ENCODE measurements at regions of chr7 and their contacts with region 1.

Region 1: DNA sequence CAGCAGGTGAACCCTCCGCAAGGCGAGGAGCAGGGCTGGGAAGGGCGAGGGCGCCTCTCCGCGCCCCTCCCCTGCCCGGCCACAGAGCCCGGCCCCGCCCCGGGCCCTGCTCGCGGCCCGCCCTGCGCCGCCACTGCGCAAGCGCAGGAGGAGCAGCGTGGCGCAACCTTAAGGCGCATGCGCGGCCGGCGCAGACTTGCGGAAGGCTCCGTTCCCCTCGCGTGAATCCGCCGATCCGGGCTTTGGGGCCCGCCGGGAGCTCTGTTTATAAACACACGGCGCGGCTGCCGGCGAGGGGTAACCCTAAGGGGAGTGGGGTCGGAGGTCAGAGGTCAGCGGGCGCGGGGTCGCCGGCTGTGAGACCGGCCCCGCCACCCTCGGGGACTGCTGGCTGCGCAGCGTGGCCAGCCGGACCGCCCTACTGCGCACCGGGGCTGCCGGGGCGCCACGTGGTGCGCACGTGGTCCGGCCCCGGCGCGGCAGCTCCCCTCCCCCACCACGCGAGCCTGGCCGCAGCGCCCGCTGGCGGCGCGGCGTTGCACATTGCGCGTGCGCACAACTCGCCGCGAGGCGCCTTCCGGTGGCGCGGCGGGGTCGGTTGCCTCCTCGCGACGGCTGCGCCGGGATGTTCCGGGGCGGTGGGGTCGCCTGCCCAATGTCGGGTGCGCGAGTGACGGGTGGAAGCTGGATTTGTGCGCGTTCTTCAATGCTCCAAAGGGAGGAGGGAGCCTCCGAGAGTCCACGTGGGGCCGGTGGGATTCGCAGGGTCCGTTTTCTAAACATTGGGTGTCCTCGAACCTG is 40.2 kb upstream of the FOXK1 start:
- DNase-seq: peak; percentile 96
- H3K4me3 ChIP-seq: peak overlapping the region; percentile 50
- H3K27ac ChIP-seq: peak overlapping the region; percentile 87
- H3K4me1 ChIP-seq: peaks cover 6% of the 10 kb centered on the region
- H3K27me3 ChIP-seq: no peaks in the 10 kb centered on the region
- CTCF ChIP-seq: peak; percentile 41

Region 2: DNA sequence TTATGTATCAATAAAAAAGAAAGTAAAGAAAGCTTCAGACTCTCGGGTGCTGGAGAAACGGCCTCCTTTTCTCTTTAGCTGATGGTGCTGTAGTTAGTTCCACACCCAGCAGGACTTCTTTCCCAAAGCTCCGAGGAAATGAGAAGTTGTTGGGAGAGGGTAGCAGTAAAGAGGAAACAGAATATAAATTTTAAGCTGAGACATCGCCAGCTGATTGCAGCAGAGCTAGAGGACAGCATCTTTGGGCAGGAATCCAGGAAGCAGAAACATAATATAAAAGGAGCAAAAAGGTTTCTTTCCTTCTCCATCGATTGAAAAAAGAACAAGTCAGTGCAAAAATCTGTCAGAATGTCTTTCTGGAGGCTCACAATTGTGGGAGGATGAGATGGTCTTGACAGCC is 576.7 kb before region 1 on chr7:
- CTCF ChIA-PET with region 1: no interaction called
- POLR2A ChIA-PET with region 1: no interaction called
- intact Hi-C with region 1: no loop called
- DNase-seq: peak; percentile 5
- H3K4me3 ChIP-seq: no peak overlapping the region
- H3K27ac ChIP-seq: no peak overlapping the region
- H3K4me1 ChIP-seq: no peaks in the 10 kb centered on the region
- H3K27me3 ChIP-seq: no peaks in the 10 kb centered on the region
- CTCF ChIP-seq: no peak

Region 3: DNA sequence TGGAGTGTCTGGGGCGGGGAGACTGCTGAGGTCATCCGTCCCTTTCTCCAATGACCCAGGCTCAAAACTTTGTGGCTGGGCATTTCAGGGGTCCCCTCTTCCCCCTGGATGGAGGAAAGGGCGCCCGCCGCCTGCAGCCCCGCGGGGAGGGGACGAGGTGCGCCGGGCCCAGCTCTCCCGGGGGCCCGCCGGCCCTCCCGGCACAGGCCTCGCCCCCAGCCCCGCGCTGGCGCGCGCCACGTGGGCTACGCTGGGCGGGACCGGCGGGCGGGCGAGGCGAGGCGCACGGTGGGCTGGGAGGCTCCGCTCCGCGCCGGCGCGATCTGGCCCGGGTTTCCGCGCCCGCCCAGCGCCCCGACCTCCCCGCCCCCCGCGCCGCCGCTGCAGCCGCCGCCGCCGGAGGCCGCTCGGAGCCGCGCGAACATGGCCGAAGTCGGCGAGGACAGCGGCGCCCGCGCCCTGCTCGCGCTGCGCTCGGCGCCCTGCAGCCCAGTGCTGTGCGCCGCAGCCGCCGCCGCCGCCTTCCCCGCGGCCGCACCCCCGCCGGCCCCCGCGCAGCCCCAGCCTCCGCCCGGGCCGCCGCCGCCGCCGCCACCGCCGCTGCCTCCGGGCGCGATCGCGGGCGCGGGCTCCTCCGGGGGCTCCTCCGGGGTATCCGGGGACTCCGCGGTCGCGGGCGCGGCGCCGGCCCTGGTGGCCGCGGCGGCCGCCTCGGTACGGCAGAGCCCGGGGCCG is 40.2 kb after region 1 on chr7 and contains the start of gene FOXK1:
- CTCF ChIA-PET with region 1: no interaction called
- POLR2A ChIA-PET with region 1: interaction called, 3 read pairs
- intact Hi-C with region 1: loop called (anchors 2 kb)
- DNase-seq: peak; percentile 86
- H3K4me3 ChIP-seq: peak within 1 kb of the TSS; percentile 88
- H3K27ac ChIP-seq: peak within 1 kb of the TSS; percentile 84
- H3K4me1 ChIP-seq: peaks cover 13% of the 10 kb centered on the region
- H3K27me3 ChIP-seq: no peaks in the 10 kb centered on the region
- CTCF ChIP-seq: no peak
- total RNA-seq, gene FOXK1: 43.8 and 46.2 TPM in 2 replicates

Measured in A673 (cell line).